Left ventricle myocardium inferior (tissue), 1 donor: ENCODE measurements at regions of chr2 and their contacts with region 1.

Region 1: DNA sequence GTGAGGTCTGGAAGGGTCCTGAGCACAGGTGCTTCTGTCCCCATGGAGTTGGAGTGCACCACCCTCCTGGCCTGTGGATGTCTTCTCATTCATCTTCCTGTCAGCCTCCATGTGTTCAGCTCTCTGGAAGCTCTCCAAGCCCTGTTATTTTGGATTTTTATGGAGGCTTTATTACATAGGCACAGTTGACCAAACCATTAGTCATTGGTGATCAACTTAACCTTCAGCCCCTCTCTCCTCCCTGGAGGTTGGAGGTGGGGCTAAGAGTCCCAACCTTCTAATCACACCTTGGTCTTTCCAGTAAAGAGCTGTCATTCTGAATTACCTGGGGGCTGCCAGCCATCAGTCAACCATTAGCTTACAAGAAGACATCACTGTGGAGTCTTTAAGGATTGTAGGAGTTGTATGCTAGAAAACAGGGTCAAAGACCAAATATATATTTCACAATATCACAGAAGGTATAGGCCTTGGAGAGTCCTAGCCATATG is 7.5 kb upstream of the MCFD2 start:
- DNase-seq: no peak
- H3K4me3 ChIP-seq: no peak overlapping the region
- H3K27ac ChIP-seq: no peak overlapping the region
- H3K4me1 ChIP-seq: peaks cover 10% of the 10 kb centered on the region
- H3K27me3 ChIP-seq: no peaks in the 10 kb centered on the region
- CTCF ChIP-seq: no peak

Region 2: DNA sequence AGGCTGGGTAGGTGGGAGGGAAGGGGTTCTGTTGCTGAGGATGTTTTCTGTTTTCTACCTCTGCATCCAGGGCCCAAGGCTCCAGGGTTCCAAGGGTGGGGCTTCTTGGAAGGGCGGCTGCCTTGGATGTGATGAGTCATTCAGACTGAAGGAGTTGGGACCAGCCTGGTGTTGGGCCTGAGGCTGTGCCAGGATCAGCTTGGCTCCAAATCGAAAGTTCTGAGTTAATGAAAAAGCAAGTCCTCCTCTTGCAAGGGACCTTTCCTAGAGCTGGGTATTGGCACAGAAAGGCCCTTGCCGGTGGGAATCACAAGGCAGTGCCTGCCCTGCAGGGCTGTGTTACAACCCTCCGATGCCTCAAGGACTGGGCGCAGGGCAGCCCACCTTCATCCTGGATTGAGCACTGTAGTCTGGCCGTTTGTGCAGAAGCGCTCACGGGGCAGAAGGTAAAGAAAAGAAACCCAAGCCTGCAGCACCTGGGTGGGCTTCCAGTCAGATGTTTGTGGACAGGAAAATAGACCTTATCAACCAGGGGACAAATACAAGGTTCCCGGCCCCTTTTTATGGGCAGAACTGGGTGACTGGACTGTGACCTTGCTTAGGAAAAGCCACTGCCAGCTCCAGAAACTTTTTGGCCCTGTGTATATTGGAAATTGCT is 45.0 kb after region 1 on chr2:
- intact Hi-C with region 1: no loop called
- DNase-seq: peak; percentile 70
- H3K4me3 ChIP-seq: no peak overlapping the region
- H3K27ac ChIP-seq: peak overlapping the region; percentile 68
- H3K4me1 ChIP-seq: peaks cover 33% of the 10 kb centered on the region
- H3K27me3 ChIP-seq: no peaks in the 10 kb centered on the region
- CTCF ChIP-seq: no peak

Region 3: DNA sequence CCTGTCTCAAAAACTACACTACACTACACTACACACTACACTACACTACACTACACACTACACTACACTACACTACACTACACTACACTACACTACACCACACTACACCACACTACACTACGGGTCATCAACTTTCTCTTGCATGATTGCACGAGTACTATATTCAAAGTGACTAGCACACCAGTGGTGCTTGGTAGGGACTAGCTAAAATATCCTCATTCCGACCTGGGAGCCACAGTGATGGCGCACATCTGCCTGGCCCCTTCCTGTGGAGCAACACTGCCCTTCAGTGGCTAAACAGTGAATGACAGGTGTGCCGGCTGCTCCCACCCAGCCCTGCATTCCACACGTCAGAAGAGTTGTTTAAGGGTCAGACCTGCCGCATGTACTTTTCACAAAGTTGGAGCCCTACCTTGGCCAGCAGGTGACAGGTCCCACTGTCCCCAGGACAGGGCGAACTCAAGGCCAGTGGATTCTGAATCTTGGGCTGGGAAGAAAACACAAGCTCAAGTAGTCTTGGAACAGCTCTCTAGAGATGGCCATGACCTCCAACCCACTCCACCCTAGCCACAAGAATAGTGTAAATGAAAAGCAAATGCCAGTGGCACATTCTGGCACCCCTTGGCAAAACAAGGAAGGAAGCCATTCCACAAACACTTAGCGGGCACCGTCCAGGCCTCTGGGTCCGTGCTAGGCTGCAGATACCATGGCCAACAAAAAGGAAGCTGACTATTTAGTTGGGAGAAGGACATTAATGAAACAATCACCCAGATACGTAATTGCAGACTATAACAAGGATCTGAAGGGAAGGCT is 400.1 kb after region 1 on chr2:
- intact Hi-C with region 1: loop called (anchors 10 kb)
- DNase-seq: peak; percentile 65
- H3K4me3 ChIP-seq: no peak overlapping the region
- H3K27ac ChIP-seq: no peak overlapping the region
- H3K4me1 ChIP-seq: peaks cover 7% of the 10 kb centered on the region
- H3K27me3 ChIP-seq: no peaks in the 10 kb centered on the region
- CTCF ChIP-seq: peak; percentile 98